ENCODE measurements at regions of chr6 and their contacts with region 1.

Region 1: GRCh38 chr6:30453508-30454116 is 35.7 kb upstream of the HLA-E start:
- DNase-seq: peak; percentile 61
- H3K4me3 ChIP-seq: no peak overlapping the region
- H3K27ac ChIP-seq: no peak overlapping the region
- H3K27me3 ChIP-seq: peaks cover 75% of the 10 kb centered on the region
- CTCF ChIP-seq: peak; percentile 84

Region 2: DNA sequence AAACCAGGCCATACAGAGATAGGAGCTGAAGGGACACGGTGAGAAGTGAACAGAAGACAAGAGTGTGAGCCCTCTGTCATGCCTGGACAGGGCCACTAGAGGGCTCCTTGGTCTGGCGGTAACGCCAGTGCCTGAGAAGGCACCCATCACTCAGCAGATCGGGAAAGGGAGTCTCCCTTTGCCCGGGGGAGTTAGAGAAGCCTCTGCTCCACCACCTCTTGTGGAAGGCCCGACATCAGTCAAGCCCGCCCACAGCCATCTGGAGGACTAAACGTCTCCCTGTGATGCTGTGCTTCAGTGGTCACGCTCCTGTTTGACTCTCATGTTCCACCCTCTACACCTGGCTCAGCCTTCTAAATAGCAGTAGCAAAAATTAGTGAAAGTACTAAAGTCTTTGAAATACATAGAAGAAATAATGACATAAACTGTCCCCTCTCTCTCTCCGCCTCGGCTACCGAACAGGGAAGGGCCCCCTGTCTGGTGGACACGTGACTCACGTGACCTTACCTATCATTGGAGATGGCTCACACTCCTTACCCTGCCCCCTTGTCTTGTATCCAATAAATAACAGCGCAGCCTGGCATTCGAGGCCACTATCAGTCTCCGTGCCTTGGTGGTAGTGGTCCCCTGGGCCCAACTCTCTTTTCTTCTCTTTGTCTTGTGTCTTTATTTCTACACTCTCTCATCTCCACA is 42.0 kb before region 1 on chr6:
- CTCF ChIA-PET with region 1: interaction called, 14 read pairs
- POLR2A ChIA-PET with region 1: no interaction called
- DNase-seq: peak; percentile 4
- H3K4me3 ChIP-seq: no peak overlapping the region
- H3K27ac ChIP-seq: no peak overlapping the region
- H3K27me3 ChIP-seq: peaks cover 30% of the 10 kb centered on the region
- CTCF ChIP-seq: peak; percentile 88

Region 3: DNA sequence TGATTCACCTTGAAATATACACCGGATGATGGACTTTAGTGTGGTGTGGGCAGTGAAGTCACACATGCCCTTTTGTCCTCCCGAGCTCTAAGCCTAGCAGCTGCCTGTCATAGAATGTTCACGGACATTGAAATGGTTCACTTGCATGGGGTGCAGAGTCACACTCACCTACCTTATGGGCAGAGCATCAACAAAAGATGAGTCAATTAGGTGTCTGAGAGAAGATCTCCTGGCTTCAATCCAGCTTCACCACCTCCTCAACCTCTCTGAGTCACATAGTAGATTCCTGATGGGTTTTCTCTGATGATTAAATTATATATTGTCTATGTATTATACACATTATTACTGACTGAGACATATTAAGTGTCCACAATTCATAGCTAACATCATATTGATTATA is 12.4 kb before region 1 on chr6:
- CTCF ChIA-PET with region 1: interaction called, 11 read pairs
- POLR2A ChIA-PET with region 1: no interaction called
- DNase-seq: no peak
- H3K4me3 ChIP-seq: no peak overlapping the region
- H3K27ac ChIP-seq: no peak overlapping the region
- H3K27me3 ChIP-seq: peaks cover 52% of the 10 kb centered on the region
- CTCF ChIP-seq: no peak

Region 4: DNA sequence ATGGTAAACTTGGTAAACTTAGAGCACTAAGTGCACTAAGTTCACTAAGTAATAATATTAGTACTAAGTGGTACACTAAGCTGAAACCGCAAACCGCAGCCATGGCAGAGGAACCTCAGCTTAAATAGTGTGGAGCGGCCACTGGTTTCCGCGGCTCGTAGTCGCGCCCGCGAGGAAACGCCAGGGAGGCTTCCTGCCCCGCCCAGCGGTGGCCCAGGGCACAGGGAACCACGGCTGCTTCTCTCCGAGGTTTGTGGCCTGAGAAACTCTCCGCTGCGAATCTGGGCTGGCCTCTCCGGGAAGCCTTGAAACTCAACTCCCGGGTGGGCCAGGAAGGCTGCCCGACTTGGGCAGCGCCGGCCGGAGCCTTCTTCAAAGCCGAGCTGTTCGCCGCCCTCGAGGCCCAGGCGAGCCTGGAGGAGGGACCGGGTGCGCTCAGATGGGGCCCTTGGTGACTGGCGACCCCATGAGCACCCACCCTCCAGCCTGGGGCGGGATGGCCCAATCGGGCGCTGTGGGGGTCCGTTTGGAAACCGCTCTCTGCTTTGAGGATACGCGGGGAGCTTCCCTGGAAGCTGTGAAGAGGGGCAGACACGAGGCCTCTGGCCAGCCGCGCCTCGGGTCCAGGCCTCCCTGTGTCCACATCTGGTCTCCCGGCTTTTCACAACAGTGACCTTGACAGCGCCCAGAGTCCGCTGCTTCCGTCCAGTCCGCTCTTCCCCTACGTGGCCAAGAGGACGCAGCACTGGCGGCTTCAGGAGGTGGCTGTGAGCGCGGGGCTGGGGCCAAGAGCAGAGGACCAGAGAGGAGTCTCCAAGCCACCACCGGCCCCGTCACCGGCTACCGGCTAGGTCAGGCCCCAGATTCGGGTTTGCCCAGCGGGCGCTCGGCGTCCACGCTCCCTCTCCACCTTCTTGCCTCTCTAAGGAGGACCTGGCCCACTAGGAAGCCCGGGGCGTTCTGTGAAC is 10.3 kb after region 1 on chr6:
- CTCF ChIA-PET with region 1: interaction called, 21 read pairs
- POLR2A ChIA-PET with region 1: no interaction called
- DNase-seq: no peak
- H3K4me3 ChIP-seq: no peak overlapping the region
- H3K27ac ChIP-seq: no peak overlapping the region
- H3K27me3 ChIP-seq: peaks cover 87% of the 10 kb centered on the region
- CTCF ChIP-seq: no peak

Region 5: GRCh38 chr6:32076321-32076809 is 1622.8 kb after region 1 on chr6:
- CTCF ChIA-PET with region 1: no interaction called
- POLR2A ChIA-PET with region 1: no interaction called
- DNase-seq: peak; percentile 51
- H3K4me3 ChIP-seq: no peak overlapping the region
- H3K27ac ChIP-seq: no peak overlapping the region
- H3K27me3 ChIP-seq: peaks cover 11% of the 10 kb centered on the region
- CTCF ChIP-seq: no peak